Astrocyte of the cerebellum (primary cell): ENCODE measurements at regions of chr7 and their contacts with region 1.

Region 1: DNA sequence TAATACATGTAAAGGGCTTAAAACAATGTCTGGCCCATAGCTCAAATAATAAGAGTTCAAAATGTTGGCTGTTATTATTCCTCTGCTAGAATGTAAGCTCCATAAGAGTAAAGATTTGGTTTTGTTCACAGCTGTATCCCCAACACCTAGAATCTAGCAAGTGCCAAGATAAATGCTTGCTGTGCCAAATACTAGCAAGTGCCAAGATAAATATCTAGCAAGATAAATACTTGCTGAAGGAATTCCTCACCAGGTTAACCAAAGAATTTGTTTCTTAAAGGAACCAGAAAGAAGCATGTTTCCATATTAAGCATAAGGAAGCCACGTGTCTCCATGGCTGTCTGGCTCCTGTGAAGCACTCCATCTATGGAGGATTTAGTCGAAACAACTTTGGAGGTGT is 235.2 kb upstream of the SP4 start:
- DNase-seq: no peak
- H3K4me3 ChIP-seq: no peak overlapping the region
- CTCF ChIP-seq: no peak

Region 2: GRCh38 chr7:21134631-21135030 is 58.0 kb before region 1 on chr7:
- in situ Hi-C with region 1: loop called (anchors 5 kb)
- DNase-seq: no peak
- H3K4me3 ChIP-seq: no peak overlapping the region
- CTCF ChIP-seq: no peak